Endothelial cell of umbilical vein (primary cell): ENCODE measurements at regions of chr5 and their contacts with region 1.

Region 1: DNA sequence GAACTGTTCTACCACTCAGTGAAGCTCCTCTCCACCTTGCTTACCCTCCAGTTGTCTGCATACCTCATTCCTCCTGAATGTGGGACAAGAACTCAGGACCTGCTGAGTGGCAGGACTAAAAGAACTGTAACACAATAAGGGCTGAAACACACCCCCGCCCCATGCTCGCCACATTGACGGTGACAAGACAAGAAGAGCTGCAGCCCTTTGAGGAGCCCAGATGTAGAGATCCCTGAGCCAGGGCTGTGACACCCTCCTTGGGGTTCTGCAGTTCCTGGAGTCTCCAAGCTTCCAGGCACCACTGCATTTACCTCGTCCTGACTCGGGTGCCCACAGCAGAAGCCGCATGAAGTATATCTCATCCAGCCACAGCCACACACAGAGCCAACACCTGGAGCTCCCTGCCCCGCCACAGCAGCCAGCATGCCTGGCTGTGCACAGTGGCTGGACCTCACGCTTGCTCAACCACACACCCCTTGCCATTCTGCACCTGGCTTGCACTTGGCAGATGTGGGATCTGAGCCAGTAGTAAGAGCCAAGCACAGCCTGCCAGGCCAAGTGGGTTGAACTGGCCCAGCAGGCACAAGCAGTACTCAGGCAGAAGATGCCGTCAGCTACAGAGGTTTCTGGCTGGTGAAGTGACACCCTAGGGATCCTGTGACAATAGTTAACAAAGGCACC is 166.1 kb downstream of the RNF180 start:
- DNase-seq: no peak
- H3K4me3 ChIP-seq: no peak overlapping the region
- H3K27ac ChIP-seq: no peak overlapping the region
- H3K4me1 ChIP-seq: no peaks in the 10 kb centered on the region
- H3K27me3 ChIP-seq: no peaks in the 10 kb centered on the region
- CTCF ChIP-seq: no peak
- POLR2A ChIP-seq: no peak

Region 2: GRCh38 chr5:65252977-65253376 is 921.2 kb after region 1 on chr5:
- CTCF ChIA-PET with region 1: no interaction called
- POLR2A ChIA-PET with region 1: no interaction called
- dilution Hi-C with region 1: no loop called
- intact Hi-C with region 1: loop called (anchors 10 kb)
- DNase-seq: no peak
- H3K4me3 ChIP-seq: no peak overlapping the region
- H3K27ac ChIP-seq: no peak overlapping the region
- H3K4me1 ChIP-seq: no peaks in the 10 kb centered on the region
- H3K27me3 ChIP-seq: no peaks in the 10 kb centered on the region
- CTCF ChIP-seq: no peak
- POLR2A ChIP-seq: no peak